HepG2 (cell line): ENCODE measurements at regions of chr2 and their contacts with region 1.

Region 1: GRCh38 chr2:38498045-38498481 is 104.7 kb downstream of the HNRNPLL start:
- DNase-seq: peak; percentile 34
- ATAC-seq: no peak
- H3K4me3 ChIP-seq: no peak overlapping the region; a peak in 1 of 6 replicates
- H3K27ac ChIP-seq: peak overlapping the region; percentile 65
- H3K4me1 ChIP-seq: peaks cover 63% of the 10 kb centered on the region
- H3K27me3 ChIP-seq: no peaks in the 10 kb centered on the region
- CTCF ChIP-seq: no peak
- EP300 ChIP-seq: no peak; a peak in 1 of 4 replicates
- POLR2A ChIP-seq: no peak
- RAD21 ChIP-seq: no peak

Region 2: DNA sequence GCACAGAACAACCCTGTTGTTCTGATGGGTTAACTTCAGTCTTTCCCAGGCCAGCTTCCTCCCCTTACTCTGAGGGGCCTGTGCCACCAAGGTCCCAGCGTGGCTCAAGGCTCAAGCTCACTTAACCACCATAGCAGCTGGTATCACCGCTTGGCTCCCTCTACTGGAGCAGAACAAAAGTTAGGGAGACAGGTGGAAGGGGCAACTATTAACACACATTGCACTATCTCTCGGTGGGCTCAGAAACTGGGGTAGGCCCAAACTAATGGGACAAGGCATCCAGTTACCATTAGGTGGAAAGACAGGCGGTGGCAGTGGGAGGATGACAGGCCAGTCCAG is 32.3 kb before region 1 on chr2:
- CTCF ChIA-PET with region 1: no interaction called
- POLR2A ChIA-PET with region 1: interaction called, 11 read pairs
- in situ Hi-C with region 1: no loop called
- intact Hi-C with region 1: no loop called
- DNase-seq: peak; percentile 75
- ATAC-seq: peak; percentile 91
- H3K4me3 ChIP-seq: no peak overlapping the region
- H3K27ac ChIP-seq: no peak overlapping the region
- H3K4me1 ChIP-seq: peaks cover 49% of the 10 kb centered on the region
- H3K27me3 ChIP-seq: no peaks in the 10 kb centered on the region; a peak in 2 of 5 replicates
- CTCF ChIP-seq: peak; percentile 92
- EP300 ChIP-seq: no peak
- POLR2A ChIP-seq: no peak
- RAD21 ChIP-seq: peak; percentile 88

Region 3: GRCh38 chr2:38474715-38475566 is 23.1 kb before region 1 on chr2:
- CTCF ChIA-PET with region 1: no interaction called
- POLR2A ChIA-PET with region 1: interaction called, 11 read pairs
- in situ Hi-C with region 1: no loop called
- intact Hi-C with region 1: no loop called
- DNase-seq: peak; percentile 48
- ATAC-seq: peak; percentile 87
- H3K4me3 ChIP-seq: no peak overlapping the region
- H3K27ac ChIP-seq: no peak overlapping the region
- H3K4me1 ChIP-seq: peaks cover 19% of the 10 kb centered on the region
- H3K27me3 ChIP-seq: peaks cover 1 to 6% of the 10 kb centered on the region in 2 experiments; a peak in 4 of 5 replicates
- CTCF ChIP-seq: peak; percentile 55
- EP300 ChIP-seq: peak in 1 of 2 experiments; percentile 25; a peak in 1 of 4 replicates
- POLR2A ChIP-seq: no peak
- RAD21 ChIP-seq: 0 out of 2 replicates have a peak, but pooled peaks have one; percentile 9

Region 4: GRCh38 chr2:38508311-38509039 is 10.4 kb after region 1 on chr2:
- CTCF ChIA-PET with region 1: no interaction called
- POLR2A ChIA-PET with region 1: interaction called, 11 read pairs
- in situ Hi-C with region 1: no loop called
- intact Hi-C with region 1: no loop called
- DNase-seq: peak; percentile 95
- ATAC-seq: peak; percentile 87
- H3K4me3 ChIP-seq: no peak overlapping the region
- H3K27ac ChIP-seq: no peak overlapping the region
- H3K4me1 ChIP-seq: peaks cover 30% of the 10 kb centered on the region
- H3K27me3 ChIP-seq: no peaks in the 10 kb centered on the region
- CTCF ChIP-seq: peak; percentile 97
- EP300 ChIP-seq: 0 out of 4 replicates have a peak, but pooled peaks of 1 of the 2 experiments have one; percentile 24
- POLR2A ChIP-seq: no peak
- RAD21 ChIP-seq: peak; percentile 96

Region 5: DNA sequence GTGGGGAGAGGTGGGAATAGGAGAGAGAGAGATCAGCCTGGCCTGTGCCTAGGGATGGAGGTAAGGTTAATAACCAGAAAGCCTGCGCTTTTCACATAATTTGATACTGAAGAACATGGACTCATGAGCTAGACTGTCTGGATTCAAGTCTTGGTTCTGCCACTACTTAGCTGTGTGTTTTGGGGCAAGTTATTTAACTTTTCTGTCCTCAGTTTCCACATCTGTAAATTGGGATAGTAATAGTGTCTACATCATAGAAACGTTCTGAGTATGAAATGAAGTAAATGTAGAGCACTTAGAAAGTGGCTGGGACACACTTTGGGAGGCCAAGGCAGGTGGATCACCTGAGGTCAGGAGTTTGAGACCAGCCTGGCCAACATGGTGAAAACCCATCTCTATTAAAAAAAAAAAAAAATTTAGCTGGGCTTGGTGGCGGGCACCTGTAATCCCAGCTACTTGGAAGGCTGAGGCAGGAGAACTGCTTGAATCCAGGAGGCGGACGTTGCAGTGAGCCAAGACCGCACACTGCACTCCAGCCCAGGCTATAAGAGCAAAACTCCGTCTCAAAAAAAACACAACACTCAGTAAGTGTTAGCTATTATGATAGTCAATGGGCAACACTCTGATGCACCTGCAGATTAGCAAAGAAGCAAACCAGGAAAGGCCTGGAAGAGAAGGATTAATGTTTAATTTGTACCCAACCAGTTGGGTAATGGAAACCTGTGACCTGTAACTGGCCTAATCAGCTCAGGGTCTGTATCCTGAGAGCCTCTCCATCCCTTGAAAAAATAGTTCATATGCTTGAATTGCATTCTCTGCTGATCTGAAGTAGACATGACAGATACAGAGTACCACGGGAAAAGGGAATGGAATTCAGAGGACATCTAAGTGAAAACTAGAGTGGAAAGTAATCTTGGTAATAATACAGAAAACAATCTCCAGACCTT is 174.7 kb after region 1 on chr2:
- CTCF ChIA-PET with region 1: no interaction called
- POLR2A ChIA-PET with region 1: no interaction called
- in situ Hi-C with region 1: no loop called
- intact Hi-C with region 1: no loop called
- DNase-seq: no peak
- ATAC-seq: no peak
- H3K4me3 ChIP-seq: no peak overlapping the region
- H3K27ac ChIP-seq: no peak overlapping the region
- H3K4me1 ChIP-seq: peaks cover 54% of the 10 kb centered on the region
- H3K27me3 ChIP-seq: no peaks in the 10 kb centered on the region
- CTCF ChIP-seq: no peak
- EP300 ChIP-seq: no peak
- POLR2A ChIP-seq: no peak
- RAD21 ChIP-seq: no peak